PC-9 (cell line): ENCODE measurements at regions of chr6 and their contacts with region 1.

Region 1: DNA sequence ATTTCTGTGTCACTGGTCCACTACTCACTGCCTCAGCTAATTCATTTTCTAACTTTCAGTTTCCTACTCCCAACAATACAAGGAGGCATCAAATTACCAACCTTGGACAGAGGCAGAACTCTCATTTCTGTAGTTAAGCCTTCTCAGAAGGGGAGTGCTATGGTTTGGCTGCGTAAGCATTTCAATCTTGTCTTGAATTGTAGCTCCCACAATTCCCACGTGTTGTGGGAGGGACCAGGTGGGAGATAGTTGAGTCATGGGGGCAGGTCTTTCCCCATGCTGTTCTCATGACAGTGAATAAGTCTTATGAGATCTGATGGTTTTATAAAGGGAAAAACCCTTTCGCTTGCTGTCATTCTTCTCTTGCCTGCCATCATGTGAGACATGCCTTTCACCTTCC is 22.9 kb downstream of the HLA-DRA start:
- DNase-seq: no peak
- H3K4me3 ChIP-seq: no peak overlapping the region
- H3K27ac ChIP-seq: no peak overlapping the region
- H3K4me1 ChIP-seq: no peaks in the 10 kb centered on the region
- H3K27me3 ChIP-seq: peaks cover 20% of the 10 kb centered on the region
- CTCF ChIP-seq: no peak

Region 2: GRCh38 chr6:32609731-32610640 is 147.4 kb after region 1 on chr6:
- CTCF ChIA-PET with region 1: interaction called, 14 read pairs
- POLR2A ChIA-PET with region 1: no interaction called
- intact Hi-C with region 1: no loop called
- DNase-seq: peak; percentile 61 to 72
- H3K4me3 ChIP-seq: no peak overlapping the region
- H3K27ac ChIP-seq: no peak overlapping the region
- H3K4me1 ChIP-seq: no peaks in the 10 kb centered on the region
- H3K27me3 ChIP-seq: peaks cover 3% of the 10 kb centered on the region
- CTCF ChIP-seq: no peak